ENCODE measurements at regions of chr6 and their contacts with region 1.

Region 1: GRCh38 chr6:26234421-26235296 is 130.3 kb upstream of the BTN3A2 start:
- DNase-seq: peak; percentile 85
- H3K4me3 Mint-ChIP-seq: peak overlapping the region; percentile 82
- H3K27ac Mint-ChIP-seq: peak overlapping the region; percentile 99
- H3K4me1 Mint-ChIP-seq: peaks cover 29% of the 10 kb centered on the region
- H3K27me3 Mint-ChIP-seq: peaks cover 12% of the 10 kb centered on the region

Region 2: DNA sequence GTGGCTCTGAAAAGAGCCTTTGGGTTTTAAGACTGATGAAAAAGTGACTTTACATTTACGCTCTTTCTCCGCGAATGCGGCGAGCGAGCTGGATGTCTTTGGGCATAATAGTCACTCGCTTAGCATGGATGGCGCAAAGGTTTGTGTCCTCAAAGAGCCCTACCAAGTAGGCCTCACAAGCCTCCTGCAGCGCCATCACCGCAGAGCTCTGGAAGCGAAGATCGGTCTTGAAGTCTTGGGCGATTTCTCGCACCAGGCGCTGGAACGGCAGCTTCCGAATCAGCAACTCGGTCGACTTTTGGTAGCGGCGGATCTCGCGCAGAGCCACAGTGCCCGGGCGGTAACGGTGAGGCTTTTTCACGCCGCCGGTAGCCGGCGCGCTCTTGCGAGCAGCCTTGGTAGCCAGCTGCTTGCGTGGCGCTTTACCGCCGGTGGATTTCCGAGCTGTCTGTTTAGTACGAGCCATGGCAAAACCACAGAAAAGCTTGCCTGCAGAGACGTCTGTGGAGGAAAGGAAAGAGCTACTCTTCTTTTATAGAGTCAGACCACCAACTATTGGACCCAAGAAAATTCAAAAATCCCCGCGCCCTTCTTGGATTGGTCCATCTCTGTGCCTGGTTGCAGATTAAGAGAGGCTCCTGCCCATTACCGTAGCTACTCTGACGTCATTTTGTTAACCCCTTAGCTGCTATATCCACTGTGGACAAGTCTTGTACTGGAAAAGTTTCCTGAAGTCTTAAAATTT is 202.9 kb before region 1 on chr6:
- CTCF ChIA-PET with region 1: no interaction called
- POLR2A ChIA-PET with region 1: interaction called, 13 read pairs
- intact Hi-C with region 1: no loop called
- DNase-seq: peak; percentile 93
- H3K4me3 Mint-ChIP-seq: peak overlapping the region; percentile 83
- H3K27ac Mint-ChIP-seq: peak overlapping the region; percentile 99
- H3K4me1 Mint-ChIP-seq: peaks cover 49% of the 10 kb centered on the region
- H3K27me3 Mint-ChIP-seq: peaks cover 17% of the 10 kb centered on the region

Region 3: DNA sequence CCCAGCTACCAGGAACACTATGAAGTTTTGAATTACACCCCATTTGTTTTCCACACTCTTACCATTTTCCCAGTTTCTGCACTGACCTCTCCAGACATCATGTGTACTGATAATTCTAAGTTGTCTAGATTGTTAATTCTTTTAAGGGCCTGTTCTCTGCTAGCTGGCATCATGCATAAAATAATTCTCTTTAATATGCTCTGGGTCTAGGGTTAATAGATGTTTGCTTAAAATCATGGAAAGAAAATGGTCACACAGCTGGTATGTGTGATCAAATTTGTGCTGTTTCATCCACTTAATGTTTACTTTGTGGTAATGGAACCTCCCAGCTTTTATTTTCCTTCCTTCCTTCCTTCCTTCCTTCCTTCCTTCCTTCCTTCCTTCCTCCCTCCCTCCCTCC is 98.3 kb before region 1 on chr6:
- CTCF ChIA-PET with region 1: no interaction called
- POLR2A ChIA-PET with region 1: no interaction called
- intact Hi-C with region 1: no loop called
- DNase-seq: no peak
- H3K4me3 Mint-ChIP-seq: no peak overlapping the region
- H3K27ac Mint-ChIP-seq: no peak overlapping the region
- H3K4me1 Mint-ChIP-seq: peaks cover 9% of the 10 kb centered on the region
- H3K27me3 Mint-ChIP-seq: no peaks in the 10 kb centered on the region

Region 4: DNA sequence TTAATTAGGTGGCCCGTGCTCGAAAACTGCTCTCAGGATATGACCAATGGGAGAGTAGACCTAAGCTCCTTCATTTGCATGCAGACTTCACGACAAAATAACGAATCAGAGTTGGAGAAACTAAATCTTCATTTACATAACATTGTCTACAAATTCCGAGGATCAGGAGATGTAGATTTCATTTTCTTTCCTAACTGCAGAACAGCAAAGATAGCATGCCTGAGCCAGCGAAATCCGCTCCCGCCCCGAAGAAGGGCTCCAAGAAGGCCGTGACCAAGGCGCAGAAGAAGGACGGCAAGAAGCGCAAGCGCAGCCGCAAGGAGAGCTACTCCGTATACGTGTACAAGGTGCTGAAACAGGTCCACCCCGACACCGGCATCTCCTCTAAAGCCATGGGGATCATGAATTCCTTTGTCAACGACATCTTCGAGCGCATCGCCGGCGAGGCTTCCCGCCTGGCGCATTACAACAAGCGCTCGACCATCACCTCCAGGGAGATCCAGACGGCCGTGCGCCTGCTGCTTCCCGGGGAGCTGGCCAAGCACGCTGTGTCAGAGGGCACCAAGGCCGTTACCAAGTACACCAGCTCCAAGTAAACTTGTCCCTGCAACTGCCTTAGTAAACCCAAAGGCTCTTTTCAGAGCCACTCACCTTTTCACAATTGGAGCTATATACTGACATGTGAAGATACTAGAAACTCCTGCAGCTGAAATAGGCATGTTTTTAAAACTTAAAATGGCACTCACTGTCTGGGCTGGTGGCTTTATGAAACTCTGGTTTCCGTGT is 50.9 kb before region 1 on chr6:
- CTCF ChIA-PET with region 1: interaction called, 5 read pairs
- POLR2A ChIA-PET with region 1: interaction called, 26 read pairs
- intact Hi-C with region 1: no loop called
- DNase-seq: peak; percentile 80
- H3K4me3 Mint-ChIP-seq: peak overlapping the region; percentile 85
- H3K27ac Mint-ChIP-seq: peak overlapping the region; percentile 95
- H3K4me1 Mint-ChIP-seq: peaks cover 37% of the 10 kb centered on the region
- H3K27me3 Mint-ChIP-seq: peaks cover under 1% of the 10 kb centered on the region

Region 5: DNA sequence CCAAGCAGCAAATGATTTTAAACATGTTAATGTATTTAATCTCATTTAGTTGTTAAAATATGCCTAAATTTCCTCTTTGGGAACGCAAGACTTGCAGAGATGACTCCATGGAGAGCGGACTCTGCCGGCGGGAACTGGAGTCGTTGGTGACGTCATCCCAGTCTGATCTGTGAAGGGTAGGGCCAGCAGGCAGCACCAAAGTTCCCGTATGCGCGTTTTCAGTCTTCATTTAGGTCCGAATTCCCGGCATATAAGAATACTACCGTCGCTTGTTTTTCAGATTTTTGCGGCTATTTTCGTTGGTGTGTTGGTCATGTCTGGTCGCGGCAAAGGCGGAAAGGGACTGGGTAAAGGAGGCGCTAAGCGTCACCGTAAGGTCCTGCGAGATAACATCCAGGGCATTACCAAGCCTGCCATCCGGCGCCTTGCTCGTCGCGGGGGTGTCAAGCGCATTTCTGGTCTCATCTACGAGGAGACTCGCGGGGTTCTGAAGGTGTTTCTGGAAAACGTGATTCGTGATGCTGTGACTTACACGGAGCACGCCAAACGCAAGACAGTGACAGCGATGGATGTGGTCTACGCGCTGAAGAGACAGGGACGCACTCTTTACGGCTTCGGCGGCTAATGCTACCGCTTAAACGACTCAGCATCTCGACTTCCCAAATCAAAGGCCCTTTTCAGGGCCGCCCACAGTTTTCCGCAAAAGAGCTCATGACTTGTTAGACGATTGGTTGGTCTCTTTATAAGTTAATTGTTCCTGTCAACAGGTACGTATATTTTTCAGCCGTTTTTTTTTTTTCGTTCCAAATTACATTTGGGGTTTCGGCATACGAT is 30.1 kb before region 1 on chr6:
- CTCF ChIA-PET with region 1: interaction called, 3 read pairs
- POLR2A ChIA-PET with region 1: interaction called, 206 read pairs
- intact Hi-C with region 1: loop called (anchors 1 kb)
- DNase-seq: peak; percentile 90
- H3K4me3 Mint-ChIP-seq: no peak overlapping the region
- H3K27ac Mint-ChIP-seq: no peak overlapping the region
- H3K4me1 Mint-ChIP-seq: peaks cover 21% of the 10 kb centered on the region
- H3K27me3 Mint-ChIP-seq: peaks cover 3% of the 10 kb centered on the region

Region 6: GRCh38 chr6:26223650-26224546 is 10.8 kb before region 1 on chr6:
- CTCF ChIA-PET with region 1: interaction called, 8 read pairs
- POLR2A ChIA-PET with region 1: interaction called, 78 read pairs
- intact Hi-C with region 1: loop called (anchors 1 kb)
- DNase-seq: peak; percentile 77
- H3K4me3 Mint-ChIP-seq: no peak overlapping the region
- H3K27ac Mint-ChIP-seq: no peak overlapping the region
- H3K4me1 Mint-ChIP-seq: peaks cover 13% of the 10 kb centered on the region
- H3K27me3 Mint-ChIP-seq: no peaks in the 10 kb centered on the region

Region 7: GRCh38 chr6:26493258-26493657 is 258.6 kb after region 1 on chr6:
- CTCF ChIA-PET with region 1: no interaction called
- POLR2A ChIA-PET with region 1: no interaction called
- intact Hi-C with region 1: no loop called
- DNase-seq: no peak
- H3K4me3 Mint-ChIP-seq: no peak overlapping the region
- H3K27ac Mint-ChIP-seq: no peak overlapping the region
- H3K4me1 Mint-ChIP-seq: peaks cover 10% of the 10 kb centered on the region
- H3K27me3 Mint-ChIP-seq: no peaks in the 10 kb centered on the region

Measured in activated CD4-positive, alpha-beta memory T cell treated with anti-CD3 and anti-CD28 coated beads for 36 hours (primary cell).